Activated CD4-positive, alpha-beta memory T cell treated with anti-CD3 and anti-CD28 coated beads, Interleukin-2, amount 10 ng/mL, durations not matched to agents 7 days and 5 days (primary cell): ENCODE measurements at regions of chr11 and their contacts with region 1.

Region 1: DNA sequence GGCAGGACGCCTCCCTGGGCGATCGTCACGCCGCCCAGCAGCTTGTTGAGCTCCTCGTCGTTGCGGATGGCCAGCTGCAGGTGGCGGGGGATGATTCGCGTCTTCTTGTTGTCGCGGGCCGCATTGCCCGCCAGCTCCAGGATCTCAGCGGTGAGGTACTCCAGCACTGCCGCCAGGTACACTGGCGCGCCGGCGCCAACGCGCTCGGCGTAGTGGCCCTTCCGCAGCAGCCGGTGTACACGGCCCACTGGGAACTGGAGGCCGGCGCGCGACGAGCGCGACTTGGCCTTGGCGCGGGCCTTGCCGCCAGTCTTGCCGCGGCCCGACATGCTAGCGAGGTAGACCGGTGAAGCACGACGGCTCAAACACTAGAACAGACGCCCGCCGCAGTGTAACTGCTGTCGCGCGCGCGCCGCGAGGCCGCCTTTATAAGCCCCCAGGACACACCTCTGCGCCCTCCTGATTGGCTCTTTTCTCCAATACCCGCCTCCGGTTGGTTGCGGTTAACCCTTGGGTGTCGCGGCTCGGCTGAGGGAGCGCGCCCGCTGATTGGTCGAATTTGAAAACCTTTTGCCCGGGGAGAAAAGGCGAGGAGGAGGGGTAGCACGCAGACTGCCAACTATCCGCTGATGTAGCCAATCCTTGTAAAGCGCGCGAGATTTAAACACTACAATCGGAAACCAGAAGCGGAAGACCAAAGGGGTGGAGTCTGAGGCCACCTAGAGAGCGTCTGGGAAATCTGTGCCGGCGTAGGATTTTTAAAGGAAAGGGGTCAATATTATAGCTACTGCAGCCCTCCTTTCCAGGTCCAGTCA is 6.4 kb downstream of the DPAGT1 start:
- DNase-seq: peak; percentile 100
- H3K4me3 Mint-ChIP-seq: peak overlapping the region; percentile 93
- H3K27ac Mint-ChIP-seq: peak overlapping the region; percentile 86
- H3K4me1 Mint-ChIP-seq: peaks cover 70% of the 10 kb centered on the region
- H3K27me3 Mint-ChIP-seq: no peaks in the 10 kb centered on the region

Region 2: GRCh38 chr11:118961591-118961990 is 133.7 kb before region 1 on chr11:
- CTCF ChIA-PET with region 1: no interaction called
- POLR2A ChIA-PET with region 1: no interaction called
- DNase-seq: no peak
- H3K4me3 Mint-ChIP-seq: no peak overlapping the region
- H3K27ac Mint-ChIP-seq: no peak overlapping the region
- H3K4me1 Mint-ChIP-seq: no peaks in the 10 kb centered on the region
- H3K27me3 Mint-ChIP-seq: peaks cover 2% of the 10 kb centered on the region

Region 3: GRCh38 chr11:119018074-119018938 is 77.0 kb before region 1 on chr11 and contains the starts of genes RPS25 and TRAPPC4:
- CTCF ChIA-PET with region 1: interaction called, 3 read pairs
- POLR2A ChIA-PET with region 1: interaction called, 28 read pairs
- DNase-seq: peak; percentile 96
- H3K4me3 Mint-ChIP-seq: peak within 1 kb of the TSS; percentile 90
- H3K27ac Mint-ChIP-seq: peak within 1 kb of the TSS; percentile 100
- H3K4me1 Mint-ChIP-seq: peaks cover 56% of the 10 kb centered on the region
- H3K27me3 Mint-ChIP-seq: no peaks in the 10 kb centered on the region
- total RNA-seq, gene RPS25: 1,257 to 1,287 TPM
- total RNA-seq, gene TRAPPC4: 67.0 to 71.1 TPM

Region 4: DNA sequence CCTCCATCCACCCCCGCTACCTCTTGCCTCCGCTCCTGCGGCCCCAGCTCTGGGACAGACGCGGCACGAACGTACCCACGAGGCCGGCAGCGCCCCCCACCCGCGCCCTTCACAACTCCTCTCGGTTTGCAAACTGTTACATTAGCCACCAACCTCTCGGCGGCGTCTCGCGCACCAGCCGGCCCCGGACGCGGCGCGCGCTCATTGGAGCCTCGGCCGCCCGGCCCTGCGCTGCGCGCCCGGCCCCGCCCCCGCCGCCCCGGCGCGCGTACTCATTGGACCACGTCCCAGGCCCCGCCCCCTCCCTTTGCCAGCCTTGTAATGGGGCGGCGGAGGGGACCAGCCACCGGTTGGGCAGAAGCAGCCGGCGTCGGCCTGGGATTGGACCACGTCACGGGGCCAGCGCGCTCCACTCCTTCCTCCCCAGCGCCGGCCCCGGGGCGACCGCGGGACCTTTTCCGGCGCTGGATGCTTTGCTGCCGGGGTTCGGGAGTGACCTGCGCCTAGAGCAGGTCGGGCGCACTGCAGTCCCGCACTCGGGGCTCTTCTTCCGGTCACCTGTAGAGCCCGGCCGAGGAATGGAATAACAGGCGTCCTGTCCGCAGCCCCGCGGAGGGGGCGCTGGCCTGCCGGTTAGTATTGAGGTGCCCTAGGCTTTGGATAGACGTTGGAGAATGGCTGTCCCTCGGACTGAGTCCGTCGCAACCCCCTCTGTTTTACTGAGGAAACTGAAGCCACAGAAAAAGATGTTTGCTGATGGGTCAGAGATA is 38.1 kb before region 1 on chr11 and contains the start of gene HYOU1:
- CTCF ChIA-PET with region 1: interaction called, 3 read pairs
- POLR2A ChIA-PET with region 1: interaction called, 68 read pairs
- DNase-seq: peak; percentile 99
- H3K4me3 Mint-ChIP-seq: peak within 1 kb of the TSS; percentile 95
- H3K27ac Mint-ChIP-seq: peak within 1 kb of the TSS; percentile 91
- H3K4me1 Mint-ChIP-seq: peaks cover 52% of the 10 kb centered on the region
- H3K27me3 Mint-ChIP-seq: no peaks in the 10 kb centered on the region
- total RNA-seq, gene HYOU1: 123 to 125 TPM

Region 5: GRCh38 chr11:119121008-119121810 is 25.9 kb after region 1 on chr11 and contains the start of gene HINFP:
- CTCF ChIA-PET with region 1: no interaction called
- POLR2A ChIA-PET with region 1: interaction called, 108 read pairs
- DNase-seq: peak; percentile 100
- H3K4me3 Mint-ChIP-seq: peak within 1 kb of the TSS; percentile 93
- H3K27ac Mint-ChIP-seq: peak within 1 kb of the TSS; percentile 76
- H3K4me1 Mint-ChIP-seq: peaks cover 29% of the 10 kb centered on the region
- H3K27me3 Mint-ChIP-seq: no peaks in the 10 kb centered on the region
- total RNA-seq, gene HINFP: 36.6 to 36.7 TPM